Endothelial cell of umbilical vein (primary cell): ENCODE measurements at regions of chr12 and their contacts with region 1.

Region 1: GRCh38 chr12:110468212-110469048 is at the starts of genes FAM216A and GPN3:
- DNase-seq: peak; percentile 98
- H3K4me3 ChIP-seq: peak within 1 kb of the TSS; percentile 60 to 84 (median 77)
- H3K27ac ChIP-seq: peak within 1 kb of the TSS; percentile 52
- H3K4me1 ChIP-seq: peaks cover 13% of the 10 kb centered on the region
- H3K27me3 ChIP-seq: no peaks in the 10 kb centered on the region
- CTCF ChIP-seq: no peak
- POLR2A ChIP-seq: peak; percentile 64
- total RNA-seq, gene FAM216A: 7.9 and 11.7 TPM in 2 replicates
- total RNA-seq, gene GPN3: 25.0 and 29.6 TPM in 2 replicates

Region 2: GRCh38 chr12:110424237-110424636 is 44.2 kb before region 1 on chr12:
- CTCF ChIA-PET with region 1: no interaction called
- POLR2A ChIA-PET with region 1: no interaction called
- dilution Hi-C with region 1: no loop called
- intact Hi-C with region 1: no loop called
- DNase-seq: no peak
- H3K4me3 ChIP-seq: no peak overlapping the region
- H3K27ac ChIP-seq: no peak overlapping the region
- H3K4me1 ChIP-seq: no peaks in the 10 kb centered on the region
- H3K27me3 ChIP-seq: peaks cover 6 to 7% of the 10 kb centered on the region in 2 experiments
- CTCF ChIP-seq: no peak
- POLR2A ChIP-seq: no peak

Region 3: GRCh38 chr12:110501752-110502738 is 33.6 kb after region 1 on chr12 and contains the starts of genes RAD9B and VPS29:
- CTCF ChIA-PET with region 1: interaction called, 18 read pairs
- POLR2A ChIA-PET with region 1: interaction called, 4 read pairs
- dilution Hi-C with region 1: no loop called
- intact Hi-C with region 1: loop called (anchors 1 kb)
- DNase-seq: peak; percentile 99
- H3K4me3 ChIP-seq: peak within 1 kb of the TSS; percentile 58 to 94 (median 80)
- H3K27ac ChIP-seq: peak within 1 kb of the TSS; percentile 68
- H3K4me1 ChIP-seq: peaks cover 13% of the 10 kb centered on the region
- H3K27me3 ChIP-seq: no peaks in the 10 kb centered on the region
- CTCF ChIP-seq: no peak
- POLR2A ChIP-seq: peak; percentile 86
- total RNA-seq, gene RAD9B: 0.15 TPM in 1 of 2 replicates, not detected in the other
- total RNA-seq, gene VPS29: 147 and 155 TPM in 2 replicates

Region 4: GRCh38 chr12:110583137-110584059 is 115.0 kb after region 1 on chr12 and contains the start of gene PPTC7:
- CTCF ChIA-PET with region 1: interaction called, 3 read pairs
- POLR2A ChIA-PET with region 1: no interaction called
- dilution Hi-C with region 1: no loop called
- intact Hi-C with region 1: loop called (anchors 5 kb)
- DNase-seq: peak; percentile 95
- H3K4me3 ChIP-seq: peak within 1 kb of the TSS; percentile 77 to 91 (median 84)
- H3K27ac ChIP-seq: peak within 1 kb of the TSS; percentile 30
- H3K4me1 ChIP-seq: peaks cover 29% of the 10 kb centered on the region
- H3K27me3 ChIP-seq: no peaks in the 10 kb centered on the region
- CTCF ChIP-seq: no peak
- POLR2A ChIP-seq: peak; percentile 90
- total RNA-seq, gene PPTC7: 15.2 and 17.0 TPM in 2 replicates

Region 5: GRCh38 chr12:110705309-110705708 is 236.9 kb after region 1 on chr12:
- CTCF ChIA-PET with region 1: no interaction called
- POLR2A ChIA-PET with region 1: no interaction called
- dilution Hi-C with region 1: no loop called
- intact Hi-C with region 1: no loop called
- DNase-seq: no peak
- H3K4me3 ChIP-seq: no peak overlapping the region
- H3K27ac ChIP-seq: no peak overlapping the region
- H3K4me1 ChIP-seq: no peaks in the 10 kb centered on the region
- H3K27me3 ChIP-seq: no peaks in the 10 kb centered on the region
- CTCF ChIP-seq: no peak
- POLR2A ChIP-seq: no peak

Region 6: DNA sequence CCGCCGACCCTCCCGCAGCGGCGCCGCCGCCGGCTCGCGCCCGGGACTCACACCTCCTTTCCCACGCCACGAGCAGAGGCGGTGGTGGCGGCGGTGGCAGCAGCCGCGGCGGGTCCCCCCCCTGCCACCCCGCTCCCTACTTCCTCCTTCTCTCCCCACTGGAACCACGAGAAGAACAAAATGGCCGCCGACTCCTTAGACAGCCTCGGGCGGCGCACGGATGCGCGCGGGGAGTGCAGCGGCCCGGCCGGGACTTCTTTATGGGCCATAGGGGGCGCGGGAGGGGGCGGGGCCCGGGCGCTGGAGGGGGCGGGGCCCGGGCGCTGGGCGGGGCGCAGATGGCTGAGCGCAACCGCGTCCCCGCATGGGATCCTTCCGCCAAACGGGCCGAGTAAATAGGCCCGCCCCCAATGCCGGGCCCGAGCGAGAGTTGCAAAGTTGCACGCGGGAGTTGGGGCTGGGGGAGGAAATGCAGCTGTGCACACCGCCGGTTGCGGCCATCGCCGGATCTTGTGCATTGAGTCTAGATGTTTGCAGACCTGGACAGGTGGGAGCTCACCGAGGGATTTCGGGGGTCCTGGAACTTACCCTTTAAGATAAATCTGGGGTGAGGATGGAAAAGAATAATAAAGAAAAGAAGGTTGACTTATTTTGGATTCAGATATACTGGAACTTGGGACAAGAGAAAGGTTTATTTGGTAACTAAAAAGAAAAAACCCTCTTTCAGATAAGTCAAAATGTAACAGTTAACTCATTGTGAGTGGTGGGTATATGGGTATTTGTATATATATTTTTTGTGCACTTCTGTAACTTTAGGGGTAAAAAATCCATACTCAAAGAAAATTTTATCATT is 274.5 kb after region 1 on chr12 and contains the start of gene PPP1CC:
- CTCF ChIA-PET with region 1: no interaction called
- POLR2A ChIA-PET with region 1: no interaction called
- dilution Hi-C with region 1: no loop called
- intact Hi-C with region 1: loop called (anchors 1 kb)
- DNase-seq: peak; percentile 90
- H3K4me3 ChIP-seq: peak within 1 kb of the TSS; percentile 94 to 97 (median 94)
- H3K27ac ChIP-seq: peak within 1 kb of the TSS; percentile 78
- H3K4me1 ChIP-seq: peaks cover 42% of the 10 kb centered on the region
- H3K27me3 ChIP-seq: no peaks in the 10 kb centered on the region
- CTCF ChIP-seq: no peak
- POLR2A ChIP-seq: peak; percentile 80
- total RNA-seq, gene PPP1CC: 139 and 140 TPM in 2 replicates

Region 7: GRCh38 chr12:110844551-110845395 is 376.3 kb after region 1 on chr12:
- CTCF ChIA-PET with region 1: no interaction called
- POLR2A ChIA-PET with region 1: no interaction called
- dilution Hi-C with region 1: no loop called
- intact Hi-C with region 1: no loop called
- DNase-seq: no peak
- H3K4me3 ChIP-seq: no peak overlapping the region
- H3K27ac ChIP-seq: no peak overlapping the region
- H3K4me1 ChIP-seq: no peaks in the 10 kb centered on the region
- H3K27me3 ChIP-seq: peaks cover 11 to 24% of the 10 kb centered on the region in 2 experiments
- CTCF ChIP-seq: no peak
- POLR2A ChIP-seq: no peak

Region 8: GRCh38 chr12:110888256-110888991 is 420.0 kb after region 1 on chr12:
- CTCF ChIA-PET with region 1: interaction called, 5 read pairs
- POLR2A ChIA-PET with region 1: no interaction called
- dilution Hi-C with region 1: no loop called
- intact Hi-C with region 1: loop called (anchors 1 kb)
- DNase-seq: no peak
- H3K4me3 ChIP-seq: no peak overlapping the region
- H3K27ac ChIP-seq: no peak overlapping the region
- H3K4me1 ChIP-seq: peaks cover 5% of the 10 kb centered on the region
- H3K27me3 ChIP-seq: peaks cover 0 to 3% of the 10 kb centered on the region in 2 experiments
- CTCF ChIP-seq: no peak
- POLR2A ChIP-seq: no peak

Region 9: DNA sequence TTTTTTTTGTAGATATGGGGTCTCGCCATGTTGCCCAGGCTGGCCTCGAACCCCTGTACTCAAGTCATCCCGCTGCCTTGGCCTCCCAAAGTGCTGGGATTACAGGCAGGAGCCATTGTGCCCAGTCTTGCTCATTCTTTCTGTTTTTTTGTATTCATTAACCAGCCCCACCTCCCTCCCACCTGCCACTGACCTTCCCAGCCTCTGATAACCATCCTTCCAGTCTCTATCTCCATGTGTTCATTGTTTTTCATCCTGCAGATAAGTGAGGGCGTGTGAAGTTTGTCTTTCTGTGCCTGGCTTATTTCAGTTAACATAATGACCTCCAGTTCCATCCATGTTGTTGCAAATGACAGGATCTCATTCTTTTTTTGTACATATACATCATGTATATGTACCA is 433.0 kb after region 1 on chr12:
- CTCF ChIA-PET with region 1: no interaction called
- POLR2A ChIA-PET with region 1: no interaction called
- dilution Hi-C with region 1: no loop called
- intact Hi-C with region 1: no loop called
- DNase-seq: no peak
- H3K4me3 ChIP-seq: no peak overlapping the region
- H3K27ac ChIP-seq: no peak overlapping the region
- H3K4me1 ChIP-seq: no peaks in the 10 kb centered on the region
- H3K27me3 ChIP-seq: peaks cover 0 to 2% of the 10 kb centered on the region in 2 experiments
- CTCF ChIP-seq: no peak
- POLR2A ChIP-seq: no peak